GM13976 (cell line): ENCODE measurements at regions of chr9 and their contacts with region 1.

Region 1: DNA sequence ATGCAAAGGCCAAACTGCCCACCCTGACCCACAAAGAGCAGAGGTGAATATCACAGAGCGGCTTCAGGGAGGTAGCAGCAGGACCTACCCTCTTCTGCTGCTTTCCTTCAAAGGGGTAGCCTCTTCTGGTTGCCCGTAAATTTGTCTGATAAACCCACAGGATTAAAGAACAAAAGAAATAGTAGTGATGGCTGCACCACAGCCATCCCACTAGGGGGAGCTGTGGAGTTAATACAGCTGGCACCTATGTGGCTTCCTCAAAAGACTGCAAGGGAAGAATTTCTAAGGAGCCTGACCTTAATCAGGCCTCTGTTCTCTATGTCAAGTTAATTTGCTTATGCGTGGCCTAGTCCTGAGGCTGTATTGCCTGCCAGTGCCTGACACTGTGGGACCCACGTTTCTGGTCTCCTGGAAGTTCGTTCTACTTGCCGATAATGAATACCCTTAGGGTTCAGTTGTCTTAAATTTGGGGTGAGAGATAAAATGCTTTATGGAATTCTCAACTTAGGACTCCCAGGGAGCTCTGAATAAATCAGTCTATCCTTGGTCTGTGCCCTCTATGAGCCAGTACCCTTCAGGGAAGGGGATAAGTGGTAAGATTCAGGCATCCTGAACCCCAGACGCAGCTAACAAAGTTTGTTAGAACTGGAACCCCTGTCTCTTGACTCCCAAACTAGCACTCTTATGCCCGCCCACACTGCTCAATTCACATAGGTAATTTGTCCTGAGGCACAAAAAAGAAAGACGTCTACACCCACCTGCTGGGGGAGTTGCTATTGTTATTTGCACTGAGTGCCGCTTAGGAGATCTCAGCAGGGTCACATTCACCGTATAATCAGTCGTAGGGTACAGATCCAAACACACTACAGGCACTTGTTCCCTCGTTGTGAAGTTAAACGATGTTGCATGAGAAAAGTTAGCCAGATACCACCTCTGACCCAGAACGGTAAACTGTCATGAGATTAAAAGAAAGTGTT is 77.1 kb downstream of the SUSD1 start:
- DNase-seq: peak; percentile 66
- CTCF ChIP-seq: peak; percentile 75

Region 2: DNA sequence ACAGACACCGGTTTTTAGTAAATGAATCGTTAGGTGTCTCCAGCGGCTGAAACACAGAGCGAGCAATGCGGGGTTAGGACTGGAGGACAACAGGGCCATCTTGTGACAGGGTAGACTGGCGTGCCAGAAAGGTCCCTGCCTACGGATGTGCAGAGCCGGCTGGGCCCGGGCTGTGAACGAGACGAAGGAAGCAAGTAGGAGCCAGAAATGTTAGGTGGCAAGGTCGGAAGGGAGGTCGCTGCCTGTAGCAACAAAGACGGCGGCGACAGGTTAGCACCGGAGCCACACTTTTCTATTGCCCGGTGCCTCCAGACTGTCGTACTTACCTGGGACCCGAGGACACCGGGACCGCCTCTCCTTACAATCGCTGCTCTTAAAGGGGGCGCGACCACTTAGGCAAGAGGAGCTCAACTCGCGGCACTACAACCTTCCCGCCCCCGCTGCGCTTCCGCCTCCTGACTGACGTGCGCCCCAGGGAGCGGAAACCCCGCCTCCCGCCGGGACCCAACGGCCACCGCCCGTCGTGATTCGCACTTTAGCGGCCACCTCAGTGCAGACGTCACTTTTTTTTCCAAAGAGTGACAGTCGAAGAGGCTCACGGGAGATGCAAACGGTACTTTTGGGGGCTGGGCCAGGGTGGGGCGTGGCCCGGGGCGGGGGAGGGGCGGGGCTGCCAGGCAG is 619.8 kb after region 1 on chr9 and contains the start of gene INIP:
- in situ Hi-C with region 1: loop called (anchors 25 kb)
- DNase-seq: peak; percentile 97
- CTCF ChIP-seq: peak; percentile 20

Region 3: DNA sequence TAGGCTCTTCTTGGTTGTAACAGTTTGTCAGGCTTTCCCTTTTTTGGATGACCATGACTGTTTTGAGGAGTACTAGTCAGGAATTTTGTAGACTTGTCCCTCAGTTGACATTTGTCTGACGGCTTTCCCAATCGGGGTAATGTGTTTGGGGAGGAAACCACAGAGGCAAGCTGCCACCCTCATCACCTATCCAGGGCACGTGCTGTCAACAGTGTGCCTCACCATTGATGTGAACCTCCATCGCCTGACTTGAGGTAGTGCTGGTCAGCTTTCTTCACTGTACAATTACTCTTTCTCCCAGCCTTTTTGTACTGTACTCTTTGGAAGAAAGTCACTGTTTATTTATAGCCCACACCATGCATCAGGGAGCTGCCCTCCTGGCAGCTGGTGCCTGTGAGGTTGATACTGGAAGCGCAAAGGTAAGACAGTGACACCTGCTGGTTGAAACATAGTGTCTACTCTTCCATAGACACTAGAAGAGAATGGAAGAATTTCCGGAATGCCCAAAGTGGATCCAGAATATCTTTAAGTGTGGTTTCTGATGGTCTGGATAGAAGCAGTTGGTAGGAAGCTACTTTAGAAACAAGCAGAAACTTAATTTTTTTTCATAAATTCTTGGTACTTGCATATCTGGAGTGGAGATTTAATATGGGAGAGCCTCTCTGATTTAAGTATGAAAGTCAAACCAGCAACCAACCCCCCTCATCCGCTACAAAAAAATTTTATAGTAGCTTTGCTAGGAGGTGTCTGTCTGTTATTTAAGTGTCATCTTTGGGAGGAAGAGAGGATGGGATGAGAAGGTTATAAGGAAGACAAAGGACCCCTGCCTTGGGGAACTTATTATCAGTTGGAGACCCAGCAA is 721.9 kb after region 1 on chr9:
- in situ Hi-C with region 1: loop called (anchors 10 kb)
- DNase-seq: peak; percentile 49
- CTCF ChIP-seq: peak; percentile 44